Activated naive CD8-positive, alpha-beta T cell treated with anti-CD3 and anti-CD28 coated beads, Interleukin-2, amount 10 ng/mL, durations not matched to agents 7 days and 5 days (primary cell): ENCODE measurements at regions of chr16 and their contacts with region 1.

Region 1: GRCh38 chr16:29973384-29974246 is at the start of gene TAOK2:
- DNase-seq: peak; percentile 96
- ATAC-seq: peak; percentile 98
- H3K4me3 Mint-ChIP-seq: peak within 1 kb of the TSS; percentile 86
- H3K27ac Mint-ChIP-seq: peak within 1 kb of the TSS; percentile 96
- H3K4me1 Mint-ChIP-seq: peaks cover 36% of the 10 kb centered on the region
- H3K27me3 Mint-ChIP-seq: no peaks in the 10 kb centered on the region
- total RNA-seq, gene TAOK2: 51.6 to 53.4 TPM

Region 2: GRCh38 chr16:29995911-29996772 is 22.5 kb after region 1 on chr16 and contains the start of gene INO80E:
- POLR2A ChIA-PET with region 1: interaction called, 73 read pairs
- DNase-seq: peak; percentile 99
- ATAC-seq: peak; percentile 95
- H3K4me3 Mint-ChIP-seq: peak within 1 kb of the TSS; percentile 98
- H3K27ac Mint-ChIP-seq: peak within 1 kb of the TSS; percentile 97
- H3K4me1 Mint-ChIP-seq: peaks cover 25% of the 10 kb centered on the region
- H3K27me3 Mint-ChIP-seq: no peaks in the 10 kb centered on the region
- total RNA-seq, gene INO80E: 113 to 118 TPM

Region 3: GRCh38 chr16:30065143-30065850 is 91.7 kb after region 1 on chr16 and contains the start of gene ALDOA:
- POLR2A ChIA-PET with region 1: no interaction called
- DNase-seq: peak; percentile 95
- ATAC-seq: peak; percentile 85
- H3K4me3 Mint-ChIP-seq: peak within 1 kb of the TSS; percentile 100
- H3K27ac Mint-ChIP-seq: peak within 1 kb of the TSS; percentile 98
- H3K4me1 Mint-ChIP-seq: peaks cover 22% of the 10 kb centered on the region
- H3K27me3 Mint-ChIP-seq: no peaks in the 10 kb centered on the region
- total RNA-seq, gene ALDOA: 1,486 to 1,632 TPM